ENCODE measurements at regions of chr2 and their contacts with region 1.

Region 1: DNA sequence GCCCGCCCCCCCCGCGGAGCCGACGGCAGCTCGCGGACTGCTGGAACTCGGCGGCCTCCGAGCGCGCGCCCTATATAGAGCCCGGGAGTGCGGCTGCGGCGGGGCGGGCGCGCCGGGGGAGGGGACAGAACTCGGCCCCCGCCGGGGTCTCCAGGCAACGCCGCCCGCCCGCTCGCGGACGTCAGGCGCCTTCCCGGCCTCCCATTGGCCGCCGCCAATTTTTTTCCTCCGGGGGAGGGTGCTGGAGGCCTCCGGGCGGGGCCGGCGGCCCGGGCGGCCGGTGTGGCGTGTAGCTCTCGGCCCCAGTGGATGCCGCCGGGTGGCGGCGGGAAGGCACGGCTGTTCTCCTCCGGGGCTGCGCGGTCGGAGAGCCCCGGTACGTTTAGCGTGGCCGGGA is at the start of gene ZFP36L2:
- DNase-seq: peak; percentile 97 to 99 (median 98)
- H3K4me3 ChIP-seq: peak within 1 kb of the TSS; percentile 80 to 92 (median 85)
- H3K27ac ChIP-seq: peak within 1 kb of the TSS; percentile 98 to 99
- H3K4me1 ChIP-seq: peaks cover 6 to 21% (median 14%) of the 10 kb centered on the region in 3 donors
- H3K27me3 ChIP-seq: no peaks in the 10 kb centered on the region
- CTCF ChIP-seq: no peak
- total RNA-seq, gene ZFP36L2: 247 TPM

Region 2: DNA sequence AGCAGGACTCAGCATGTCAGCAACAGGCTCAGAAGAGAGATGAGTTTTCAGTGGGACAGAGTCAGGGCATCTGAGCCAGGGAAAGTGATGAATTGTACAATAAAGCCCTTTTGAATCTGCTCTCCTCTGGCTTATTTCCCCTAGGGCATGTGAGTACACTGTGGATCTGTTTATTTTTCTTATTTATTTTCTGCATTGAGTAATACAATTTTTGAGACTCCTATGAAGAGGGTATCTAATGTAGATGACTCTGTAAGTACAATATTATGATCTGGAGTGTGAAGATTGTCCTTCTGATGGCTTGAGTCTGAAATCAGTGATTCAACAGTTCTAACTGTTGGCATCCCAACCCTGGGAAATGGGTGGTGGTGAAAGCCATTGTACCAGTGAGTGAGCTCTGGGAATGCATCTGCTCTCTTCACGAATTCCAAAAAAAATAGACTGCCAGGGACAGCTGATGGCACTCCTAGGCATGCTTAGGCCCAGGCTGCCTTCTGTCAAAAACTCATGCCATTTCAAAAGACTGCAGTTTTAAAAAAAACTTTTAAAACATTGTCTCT is 483.1 kb before region 1 on chr2:
- intact Hi-C with region 1: no loop called
- DNase-seq: no peak
- H3K4me3 ChIP-seq: no peak overlapping the region
- H3K27ac ChIP-seq: no peak overlapping the region
- H3K4me1 ChIP-seq: peaks cover 0 to 2% (median 0%) of the 10 kb centered on the region in 3 donors
- H3K27me3 ChIP-seq: no peaks in the 10 kb centered on the region
- CTCF ChIP-seq: no peak

Region 3: DNA sequence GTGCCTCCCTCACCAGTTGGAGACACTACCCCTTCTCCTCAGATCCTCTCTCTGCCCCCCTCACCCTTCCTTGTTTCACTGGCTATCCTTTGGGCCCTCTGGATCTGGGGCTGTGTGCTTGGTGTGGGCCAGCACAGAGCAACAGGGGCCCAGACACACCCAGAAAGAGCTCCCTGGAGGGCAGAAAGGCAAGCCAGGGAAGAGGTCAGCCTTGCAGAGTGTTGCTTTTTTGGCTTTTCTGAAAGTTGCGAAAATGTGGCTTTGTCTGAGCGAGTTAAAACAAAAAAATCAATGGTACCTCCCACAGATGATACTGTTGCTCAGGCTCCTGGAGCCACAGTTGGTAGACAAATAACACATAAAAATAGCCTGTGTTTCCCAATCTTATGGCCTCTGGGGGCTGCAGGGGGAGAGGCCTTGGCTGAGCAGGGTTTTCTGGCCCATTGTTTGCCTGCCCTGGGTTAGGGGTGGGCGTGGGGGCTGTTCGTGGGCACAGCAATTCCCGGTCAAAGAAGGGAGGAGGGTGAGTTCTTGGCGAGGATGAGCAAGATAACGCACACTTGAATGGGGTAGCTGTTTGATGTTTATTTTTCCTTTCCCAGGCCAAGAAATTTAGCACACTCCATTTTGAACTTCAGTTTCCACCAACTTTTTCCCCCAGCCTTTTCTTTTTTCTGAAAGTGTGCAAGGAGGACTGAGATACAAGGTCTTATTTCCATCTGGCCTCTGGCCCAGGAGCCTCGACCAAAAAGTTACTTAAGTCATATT is 267.1 kb before region 1 on chr2:
- intact Hi-C with region 1: loop called (anchors 10 kb)
- DNase-seq: peak in 1 of 5 donors; percentile 82
- H3K4me3 ChIP-seq: no peak overlapping the region
- H3K27ac ChIP-seq: peak overlapping the region in 1 of 2 donors; percentile 67
- H3K4me1 ChIP-seq: peaks cover 0 to 46% (median 27%) of the 10 kb centered on the region in 3 donors
- H3K27me3 ChIP-seq: no peaks in the 10 kb centered on the region
- CTCF ChIP-seq: no peak

Region 4: DNA sequence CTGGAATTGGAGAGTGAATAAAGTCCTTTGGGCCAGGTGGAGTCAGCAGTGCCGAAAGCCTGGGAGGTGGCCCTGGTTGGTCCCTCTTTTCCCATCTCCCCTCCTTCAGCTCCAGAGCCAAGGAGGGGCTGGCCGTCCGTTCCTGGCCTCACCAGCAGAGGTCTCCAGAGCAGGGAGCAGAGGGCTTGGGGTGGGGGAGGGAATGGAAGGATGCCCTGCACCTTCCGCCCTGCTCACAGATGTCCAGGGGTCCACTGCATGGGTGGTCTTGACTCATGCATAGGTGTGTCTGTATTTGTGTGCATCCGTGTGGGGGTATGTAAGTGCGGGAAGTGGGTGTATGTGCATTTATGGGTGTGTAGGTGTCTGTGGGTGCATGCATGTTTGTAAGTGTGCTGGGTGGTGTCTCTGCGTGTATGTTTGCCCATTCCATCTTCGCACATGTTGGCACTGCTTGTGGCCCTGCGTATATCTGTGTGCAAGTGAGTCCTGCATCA is 202.0 kb before region 1 on chr2:
- intact Hi-C with region 1: loop called (anchors 5 kb)
- DNase-seq: peak; percentile 85 to 88 (median 88)
- H3K4me3 ChIP-seq: no peak overlapping the region
- H3K27ac ChIP-seq: no peak overlapping the region
- H3K4me1 ChIP-seq: peaks cover 0 to 4% (median 3%) of the 10 kb centered on the region in 3 donors
- H3K27me3 ChIP-seq: no peaks in the 10 kb centered on the region
- CTCF ChIP-seq: peak; percentile 90